Transverse colon (tissue), 4 donors: ENCODE measurements at regions of chr13 and their contacts with region 1.

Region 1: GRCh38 chr13:95301183-95301967 is at the start of gene ABCC4:
- DNase-seq: peak; percentile 73
- H3K4me3 ChIP-seq: peak within 1 kb of the TSS; percentile 35 to 89 (median 70)
- H3K27ac ChIP-seq: peak within 1 kb of the TSS; percentile 84 to 87 (median 85)
- H3K4me1 ChIP-seq: peaks cover 0 to 53% (median 28%) of the 10 kb centered on the region in 4 donors
- H3K27me3 ChIP-seq: no peaks in the 10 kb centered on the region
- CTCF ChIP-seq: no peak
- EP300 ChIP-seq: no peak
- POLR2A ChIP-seq: no peak
- total RNA-seq, gene ABCC4: 15.8 to 26.0 (median 23.8) TPM

Region 2: DNA sequence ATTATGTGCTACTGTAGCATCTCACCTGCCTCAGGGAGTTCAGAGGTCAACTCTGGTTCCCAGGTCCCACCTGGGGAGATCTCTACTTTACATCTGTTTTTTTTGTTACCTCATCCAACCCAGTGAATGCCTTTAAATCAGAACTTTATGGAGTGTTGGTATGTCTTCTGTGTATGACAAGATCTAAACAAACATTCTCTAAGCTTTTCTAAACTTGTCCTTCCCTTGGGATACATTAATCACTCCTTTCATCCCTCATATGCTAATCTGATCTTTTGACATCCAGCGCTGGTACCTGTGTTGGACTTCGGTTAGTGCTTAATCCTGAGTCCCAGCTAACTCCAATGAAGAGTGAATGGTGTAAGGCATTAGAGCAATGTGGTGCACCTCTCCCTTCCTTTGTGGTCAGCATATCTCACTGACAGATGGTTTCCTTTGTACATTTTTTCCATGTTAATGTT is 213.6 kb before region 1 on chr13:
- in situ Hi-C with region 1: no loop called
- intact Hi-C with region 1: no loop called
- DNase-seq: no peak
- H3K4me3 ChIP-seq: no peak overlapping the region
- H3K27ac ChIP-seq: no peak overlapping the region
- H3K4me1 ChIP-seq: no peaks in the 10 kb centered on the region
- H3K27me3 ChIP-seq: no peaks in the 10 kb centered on the region
- CTCF ChIP-seq: no peak
- EP300 ChIP-seq: no peak
- POLR2A ChIP-seq: no peak

Region 3: DNA sequence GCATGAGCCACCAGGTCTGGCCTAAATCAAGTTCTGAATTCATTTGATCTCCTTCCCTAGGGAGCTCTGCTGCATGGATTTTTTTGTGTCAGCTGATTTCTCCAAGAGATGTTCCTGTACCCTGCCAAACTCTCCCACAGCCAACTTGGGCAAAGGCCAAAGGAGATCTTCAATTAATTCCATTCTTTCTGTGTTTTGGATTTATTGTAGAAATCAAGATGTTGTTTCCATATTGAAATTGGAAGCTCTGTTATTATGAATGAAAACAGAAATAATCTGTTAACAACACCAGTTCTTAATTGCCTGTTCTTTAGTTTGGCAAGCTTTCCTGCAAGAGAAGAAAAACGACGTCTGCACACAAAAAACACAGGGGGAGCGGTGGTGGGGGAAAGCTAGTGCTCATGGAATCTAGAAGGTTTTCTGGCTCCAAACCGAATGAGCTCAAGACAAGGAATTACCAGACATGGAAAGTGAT is 86.4 kb after region 1 on chr13:
- in situ Hi-C with region 1: no loop called
- intact Hi-C with region 1: loop called (anchors 10 kb)
- DNase-seq: no peak
- H3K4me3 ChIP-seq: no peak overlapping the region
- H3K27ac ChIP-seq: peak overlapping the region in 2 of 4 donors; percentile 31 to 66
- H3K4me1 ChIP-seq: peaks cover 0 to 8% (median 2%) of the 10 kb centered on the region in 4 donors
- H3K27me3 ChIP-seq: no peaks in the 10 kb centered on the region
- CTCF ChIP-seq: no peak
- EP300 ChIP-seq: no peak
- POLR2A ChIP-seq: no peak